Mammary epithelial cell (primary cell): ENCODE measurements at regions of chr14 and their contacts with region 1.

Region 1: GRCh38 chr14:64060648-64061096 is 207.9 kb downstream of the SYNE2 start:
- DNase-seq: peak; percentile 96
- H3K4me3 ChIP-seq: no peak overlapping the region
- H3K27ac ChIP-seq: peak overlapping the region; percentile 91
- H3K4me1 ChIP-seq: peaks cover 37% of the 10 kb centered on the region
- H3K27me3 ChIP-seq: no peaks in the 10 kb centered on the region
- CTCF ChIP-seq: peak; percentile 70 to 80

Region 2: DNA sequence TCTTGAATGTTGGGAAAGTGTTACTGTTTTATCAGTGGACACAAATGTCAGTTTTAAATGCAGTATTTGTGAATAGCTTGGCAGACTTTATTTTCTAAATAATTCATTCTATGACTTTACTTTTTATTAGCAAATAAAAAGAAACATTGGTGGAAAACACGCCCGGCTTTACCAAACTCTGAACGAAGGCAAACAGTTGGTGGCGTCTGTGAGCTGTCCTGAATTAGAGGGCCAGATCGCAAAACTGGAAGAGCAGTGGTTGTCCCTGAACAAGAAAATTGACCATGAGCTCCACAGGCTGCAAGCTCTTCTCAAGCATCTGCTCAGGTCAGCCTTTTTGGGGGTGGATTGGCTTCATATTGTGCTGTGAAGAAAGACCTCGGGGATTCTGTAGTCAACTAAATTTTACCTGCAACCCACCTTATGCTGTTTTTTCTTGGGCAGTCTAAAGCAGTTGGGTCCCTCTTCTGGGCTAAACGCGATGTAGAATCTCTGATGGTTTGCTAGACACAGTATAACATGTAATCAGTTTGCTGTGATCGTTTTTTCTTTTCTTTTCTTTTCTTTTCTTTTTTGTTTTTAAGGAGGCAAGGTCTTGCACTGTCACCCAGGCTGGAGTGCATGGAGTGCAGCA is 77.1 kb after region 1 on chr14:
- CTCF ChIA-PET with region 1: no interaction called
- dilution Hi-C with region 1: loop called (anchors 5 kb)
- in situ Hi-C with region 1: no loop called
- intact Hi-C with region 1: no loop called
- DNase-seq: no peak
- H3K4me3 ChIP-seq: no peak overlapping the region
- H3K27ac ChIP-seq: no peak overlapping the region
- H3K4me1 ChIP-seq: no peaks in the 10 kb centered on the region
- H3K27me3 ChIP-seq: no peaks in the 10 kb centered on the region
- CTCF ChIP-seq: no peak